Endothelial cell of umbilical vein (primary cell): ENCODE measurements at regions of chrX and their contacts with region 1.

Region 1: GRCh38 chrX:20141281-20142220 is at the start of gene EIF1AX:
- DNase-seq: peak; percentile 98
- H3K4me3 ChIP-seq: peak within 1 kb of the TSS; percentile 55 to 87 (median 69)
- H3K27ac ChIP-seq: peak within 1 kb of the TSS; percentile 56
- H3K4me1 ChIP-seq: peaks cover 22% of the 10 kb centered on the region
- H3K27me3 ChIP-seq: no peaks in the 10 kb centered on the region
- CTCF ChIP-seq: no peak
- POLR2A ChIP-seq: peak; percentile 46
- total RNA-seq, gene EIF1AX: 89.4 and 94.7 TPM in 2 replicates

Region 2: GRCh38 chrX:20217275-20217674 is 75.7 kb after region 1 on chrX:
- CTCF ChIA-PET with region 1: no interaction called
- POLR2A ChIA-PET with region 1: no interaction called
- dilution Hi-C with region 1: no loop called
- intact Hi-C with region 1: loop called (anchors 1 kb)
- DNase-seq: peak; percentile 82
- H3K4me3 ChIP-seq: peak overlapping the region in 2 of 3 experiments; percentile 37 to 95
- H3K27ac ChIP-seq: peak overlapping the region; percentile 78
- H3K4me1 ChIP-seq: peaks cover 24% of the 10 kb centered on the region
- H3K27me3 ChIP-seq: no peaks in the 10 kb centered on the region
- CTCF ChIP-seq: no peak
- POLR2A ChIP-seq: no peak